ENCODE measurements at regions of chr2 and their contacts with region 1.

Region 1: DNA sequence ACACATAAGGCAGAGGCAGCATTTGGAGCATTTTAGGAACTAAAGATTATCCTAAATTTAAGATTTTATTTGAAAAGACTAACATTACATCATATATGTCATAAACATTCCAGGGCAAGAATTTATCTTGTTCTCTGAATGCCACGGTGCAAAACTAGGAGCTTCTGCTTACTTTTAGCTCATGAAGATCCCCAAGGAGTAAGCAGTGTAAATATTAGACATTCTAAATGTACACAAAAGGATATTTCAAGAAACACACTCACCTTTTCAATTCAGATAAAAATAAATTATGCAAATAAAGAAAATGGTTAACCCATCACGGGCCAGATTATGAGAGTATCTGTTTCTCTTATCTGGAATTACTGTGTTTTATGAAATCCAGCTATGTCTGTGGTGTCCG is 101.7 kb upstream of the ETAA1 start:
- DNase-seq: no peak
- H3K4me3 ChIP-seq: no peak overlapping the region
- H3K27ac ChIP-seq: no peak overlapping the region
- H3K27me3 ChIP-seq: no peaks in the 10 kb centered on the region
- CTCF ChIP-seq: no peak

Region 2: DNA sequence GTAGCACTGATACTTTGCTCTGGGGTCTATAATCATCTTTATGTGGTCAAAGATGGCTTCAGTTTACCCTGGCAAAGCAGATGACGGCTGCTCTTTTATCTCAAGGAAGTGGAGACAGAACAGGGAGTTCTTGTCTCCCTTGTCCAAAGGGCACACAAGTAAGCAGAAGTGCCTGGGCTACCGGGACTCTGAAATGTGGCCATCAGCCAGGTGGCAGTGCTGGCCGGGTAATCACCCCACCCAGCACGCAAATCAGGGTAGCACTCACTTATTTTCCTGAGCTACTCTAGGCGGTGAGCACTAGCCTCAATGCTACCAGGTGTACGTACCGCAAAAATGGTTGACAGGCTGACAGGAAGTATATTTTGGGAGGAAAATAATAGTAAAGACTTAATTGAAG is 18.0 kb before region 1 on chr2:
- CTCF ChIA-PET with region 1: interaction called, 10 read pairs
- POLR2A ChIA-PET with region 1: no interaction called
- DNase-seq: no peak
- H3K4me3 ChIP-seq: no peak overlapping the region
- H3K27ac ChIP-seq: no peak overlapping the region
- H3K27me3 ChIP-seq: no peaks in the 10 kb centered on the region
- CTCF ChIP-seq: no peak

Region 3: GRCh38 chr2:67514515-67514914 is 219.1 kb after region 1 on chr2:
- CTCF ChIA-PET with region 1: no interaction called
- POLR2A ChIA-PET with region 1: no interaction called
- DNase-seq: peak; percentile 42
- H3K4me3 ChIP-seq: no peak overlapping the region
- H3K27ac ChIP-seq: no peak overlapping the region
- H3K27me3 ChIP-seq: no peaks in the 10 kb centered on the region
- CTCF ChIP-seq: no peak

Region 4: GRCh38 chr2:68766376-68766845 is 1471.0 kb after region 1 on chr2:
- CTCF ChIA-PET with region 1: no interaction called
- POLR2A ChIA-PET with region 1: no interaction called
- DNase-seq: no peak
- H3K4me3 ChIP-seq: no peak overlapping the region
- H3K27ac ChIP-seq: no peak overlapping the region
- H3K27me3 ChIP-seq: no peaks in the 10 kb centered on the region
- CTCF ChIP-seq: no peak

Measured in AG04450 (cell line).